ENCODE measurements at regions of chr9 and their contacts with region 1.

Region 1: GRCh38 chr9:3441197-3441816 is 84.5 kb downstream of the RFX3 start:
- DNase-seq: peak; percentile 24
- ATAC-seq: peak; percentile 99
- H3K4me3 ChIP-seq: no peak overlapping the region
- H3K27ac ChIP-seq: no peak overlapping the region
- H3K4me1 ChIP-seq: no peaks in the 10 kb centered on the region
- H3K27me3 ChIP-seq: no peaks in the 10 kb centered on the region
- CTCF ChIP-seq: peak; percentile 40 to 72 (median 72)
- EP300 ChIP-seq: no peak
- POLR2A ChIP-seq: no peak
- RAD21 ChIP-seq: peak; percentile 76

Region 2: DNA sequence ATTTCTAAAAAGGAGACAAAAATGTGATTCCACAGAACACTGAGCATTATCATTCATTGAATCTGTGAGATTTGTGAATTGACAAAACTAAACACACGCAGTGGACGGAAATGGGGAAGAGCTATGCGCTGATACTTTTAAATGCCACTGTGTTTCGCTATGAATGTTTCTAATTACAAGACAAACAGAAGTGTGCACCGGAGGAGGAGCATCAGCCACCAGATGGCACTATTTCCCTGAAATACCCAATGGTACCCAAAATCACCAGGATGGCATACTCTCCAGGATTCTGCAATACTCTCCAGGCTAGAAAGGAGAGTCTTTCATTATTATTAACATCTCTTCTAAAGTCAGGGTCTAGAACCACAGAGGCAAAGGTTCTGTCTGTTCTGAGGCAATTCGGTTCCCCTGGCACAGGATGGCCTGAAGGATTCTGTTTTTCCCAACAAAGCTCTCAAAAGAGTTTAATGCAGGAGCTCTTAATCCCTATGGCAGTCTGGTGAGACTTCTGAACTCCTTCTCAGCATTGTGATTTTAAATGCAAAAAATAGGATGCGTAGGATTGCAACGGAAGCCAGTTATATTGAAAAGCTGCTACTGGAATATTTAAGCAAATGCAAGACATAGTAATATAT is 583.6 kb before region 1 on chr9:
- CTCF ChIA-PET with region 1: interaction called, 9 read pairs
- POLR2A ChIA-PET with region 1: no interaction called
- RAD21 ChIA-PET with region 1: interaction called, 11 read pairs
- SMC1A ChIA-PET with region 1: interaction called, 3 read pairs
- in situ Hi-C with region 1: loop called (anchors 10 kb)
- intact Hi-C with region 1: loop called (anchors 5 kb)
- DNase-seq: peak; percentile 37
- ATAC-seq: peak; percentile 98
- H3K4me3 ChIP-seq: no peak overlapping the region
- H3K27ac ChIP-seq: no peak overlapping the region
- H3K4me1 ChIP-seq: no peaks in the 10 kb centered on the region
- H3K27me3 ChIP-seq: peaks cover 0 to 1% of the 10 kb centered on the region in 2 experiments; a peak in 1 of 4 replicates
- CTCF ChIP-seq: peak; percentile 80 to 93 (median 80)
- EP300 ChIP-seq: no peak
- POLR2A ChIP-seq: no peak
- RAD21 ChIP-seq: peak; percentile 76

Region 3: GRCh38 chr9:3240656-3241268 is 200.5 kb before region 1 on chr9:
- CTCF ChIA-PET with region 1: interaction called, 305 read pairs
- POLR2A ChIA-PET with region 1: no interaction called
- RAD21 ChIA-PET with region 1: interaction called, 118 read pairs
- SMC1A ChIA-PET with region 1: interaction called, 136 read pairs
- in situ Hi-C with region 1: loop called (anchors 5 kb)
- intact Hi-C with region 1: loop called (anchors 1 kb)
- DNase-seq: peak; percentile 35
- ATAC-seq: peak; percentile 97
- H3K4me3 ChIP-seq: no peak overlapping the region
- H3K27ac ChIP-seq: no peak overlapping the region
- H3K4me1 ChIP-seq: peaks cover 10% of the 10 kb centered on the region; the same call in 1 of the 2 replicates
- H3K27me3 ChIP-seq: no peaks in the 10 kb centered on the region
- CTCF ChIP-seq: peak; percentile 81 to 93 (median 86); a peak in 5 of 6 replicates
- EP300 ChIP-seq: no peak
- POLR2A ChIP-seq: no peak
- RAD21 ChIP-seq: peak; percentile 89

Region 4: GRCh38 chr9:3331817-3332216 is 109.5 kb before region 1 on chr9:
- CTCF ChIA-PET with region 1: interaction called, 112 read pairs
- POLR2A ChIA-PET with region 1: no interaction called
- RAD21 ChIA-PET with region 1: interaction called, 17 read pairs
- SMC1A ChIA-PET with region 1: interaction called, 59 read pairs
- in situ Hi-C with region 1: no loop called
- intact Hi-C with region 1: loop called (anchors 5 kb)
- DNase-seq: no peak
- ATAC-seq: no peak; the same call in 2 of the 3 replicates
- H3K4me3 ChIP-seq: no peak overlapping the region
- H3K27ac ChIP-seq: no peak overlapping the region
- H3K4me1 ChIP-seq: no peaks in the 10 kb centered on the region
- H3K27me3 ChIP-seq: no peaks in the 10 kb centered on the region
- CTCF ChIP-seq: peak; percentile 11 to 29 (median 14); a peak in 3 of 6 replicates
- EP300 ChIP-seq: no peak
- POLR2A ChIP-seq: no peak
- RAD21 ChIP-seq: peak; percentile 16; the same call in 1 of the 2 replicates

Region 5: GRCh38 chr9:3385871-3386270 is 55.4 kb before region 1 on chr9:
- CTCF ChIA-PET with region 1: interaction called, 15 read pairs
- POLR2A ChIA-PET with region 1: no interaction called
- RAD21 ChIA-PET with region 1: interaction called, 4 read pairs
- SMC1A ChIA-PET with region 1: interaction called, 6 read pairs
- in situ Hi-C with region 1: no loop called
- intact Hi-C with region 1: no loop called
- DNase-seq: peak; percentile 63
- ATAC-seq: peak; percentile 98
- H3K4me3 ChIP-seq: no peak overlapping the region
- H3K27ac ChIP-seq: no peak overlapping the region
- H3K4me1 ChIP-seq: peaks cover 4% of the 10 kb centered on the region
- H3K27me3 ChIP-seq: no peaks in the 10 kb centered on the region
- CTCF ChIP-seq: no peak
- EP300 ChIP-seq: 0 out of 4 replicates have a peak, but pooled peaks of 1 of the 2 experiments have one; percentile 10
- POLR2A ChIP-seq: no peak
- RAD21 ChIP-seq: no peak

Region 6: DNA sequence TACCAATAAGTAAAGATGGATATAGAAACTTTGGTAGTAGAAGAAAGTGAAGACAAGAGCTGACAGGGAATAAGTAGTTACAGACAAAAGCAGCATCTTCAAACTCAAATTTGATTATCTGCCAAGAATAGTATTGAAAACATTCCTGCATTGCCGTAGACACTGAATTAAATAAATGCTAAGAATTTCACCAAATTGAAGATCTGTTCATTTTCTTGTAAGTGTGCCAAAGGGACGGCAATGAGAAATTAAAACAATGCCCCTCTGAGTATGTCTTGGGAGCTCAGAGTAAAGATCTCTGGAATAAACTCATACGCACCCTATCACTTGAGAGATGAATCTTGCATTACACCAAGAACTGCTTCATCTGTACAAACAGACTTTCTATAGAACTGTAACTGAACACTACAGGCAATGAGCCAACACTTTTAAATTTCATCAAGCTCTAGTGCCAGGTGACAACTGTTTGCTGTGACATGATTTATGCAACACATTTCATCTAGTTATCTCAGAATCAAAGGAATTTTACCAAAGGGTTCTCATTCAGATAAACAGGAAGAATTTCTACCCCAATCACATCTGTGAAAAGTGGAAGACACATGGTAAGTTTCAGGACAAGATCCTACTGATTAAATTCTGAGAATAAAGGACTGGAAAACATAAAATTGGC is 17.6 kb after region 1 on chr9:
- CTCF ChIA-PET with region 1: interaction called, 24 read pairs
- POLR2A ChIA-PET with region 1: no interaction called
- RAD21 ChIA-PET with region 1: interaction called, 5 read pairs
- SMC1A ChIA-PET with region 1: interaction called, 23 read pairs
- in situ Hi-C with region 1: no loop called
- intact Hi-C with region 1: no loop called
- DNase-seq: no peak
- ATAC-seq: no peak
- H3K4me3 ChIP-seq: no peak overlapping the region
- H3K27ac ChIP-seq: no peak overlapping the region
- H3K4me1 ChIP-seq: no peaks in the 10 kb centered on the region
- H3K27me3 ChIP-seq: no peaks in the 10 kb centered on the region
- CTCF ChIP-seq: no peak
- EP300 ChIP-seq: no peak
- POLR2A ChIP-seq: no peak
- RAD21 ChIP-seq: no peak

Measured in GM12878 (cell line).